Panc1 (cell line): ENCODE measurements at regions of chr18 and their contacts with region 1.

Region 1: GRCh38 chr18:74040459-74041332 is 106.9 kb downstream of the FBXO15 start:
- DNase-seq: no peak
- ATAC-seq: peak; percentile 95
- H3K4me3 ChIP-seq: no peak overlapping the region
- H3K27ac ChIP-seq: no peak overlapping the region
- H3K4me1 ChIP-seq: no peaks in the 10 kb centered on the region
- H3K27me3 ChIP-seq: no peaks in the 10 kb centered on the region
- CTCF ChIP-seq: peak; percentile 94

Region 2: GRCh38 chr18:73733806-73734314 is 306.8 kb before region 1 on chr18:
- CTCF ChIA-PET with region 1: no interaction called
- POLR2A ChIA-PET with region 1: no interaction called
- in situ Hi-C with region 1: no loop called
- intact Hi-C with region 1: no loop called
- DNase-seq: no peak
- ATAC-seq: no peak
- H3K4me3 ChIP-seq: no peak overlapping the region
- H3K27ac ChIP-seq: no peak overlapping the region
- H3K4me1 ChIP-seq: no peaks in the 10 kb centered on the region
- H3K27me3 ChIP-seq: no peaks in the 10 kb centered on the region
- CTCF ChIP-seq: no peak

Region 3: GRCh38 chr18:74116633-74117554 is 76.2 kb after region 1 on chr18:
- CTCF ChIA-PET with region 1: interaction called, 4 read pairs
- POLR2A ChIA-PET with region 1: no interaction called
- in situ Hi-C with region 1: no loop called
- intact Hi-C with region 1: loop called (anchors 5 kb)
- DNase-seq: peak; percentile 18
- ATAC-seq: peak; percentile 80; the same call in 1 of the 2 replicates
- H3K4me3 ChIP-seq: no peak overlapping the region
- H3K27ac ChIP-seq: no peak overlapping the region
- H3K4me1 ChIP-seq: no peaks in the 10 kb centered on the region
- H3K27me3 ChIP-seq: peaks cover 13% of the 10 kb centered on the region; the same call in 1 of the 2 replicates
- CTCF ChIP-seq: peak; percentile 86

Region 4: DNA sequence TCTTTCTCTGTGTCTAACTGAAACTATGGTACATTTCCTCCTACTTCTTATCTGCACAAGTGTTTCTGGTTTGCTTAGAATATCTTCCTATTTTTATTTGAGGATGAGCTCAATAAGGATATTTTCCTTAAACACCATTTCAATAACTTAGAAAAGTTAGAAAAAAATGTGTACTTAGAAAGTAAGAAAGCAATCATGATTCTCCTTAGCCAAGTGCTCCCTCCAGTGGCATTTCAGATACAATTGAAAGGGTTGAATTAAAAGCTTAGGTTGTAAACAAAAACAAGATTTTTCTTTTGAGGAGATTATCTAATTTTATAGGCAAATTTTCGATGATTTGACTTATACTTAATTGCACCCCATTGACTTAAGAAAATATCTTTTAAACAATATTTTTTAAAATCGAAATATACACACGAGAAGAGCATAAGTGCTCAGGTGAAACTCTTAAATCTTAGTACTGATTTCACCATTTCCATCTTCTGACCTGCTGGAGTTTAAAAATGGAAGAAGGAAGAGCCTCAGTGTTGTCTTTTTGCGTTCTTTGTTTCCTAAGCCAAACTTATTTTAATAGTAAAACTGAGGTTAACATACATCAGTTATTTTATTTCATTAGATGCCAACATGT is 301.8 kb after region 1 on chr18:
- CTCF ChIA-PET with region 1: interaction called, 4 read pairs
- POLR2A ChIA-PET with region 1: no interaction called
- in situ Hi-C with region 1: no loop called
- intact Hi-C with region 1: loop called (anchors 2 kb)
- DNase-seq: peak; percentile 54
- ATAC-seq: peak; percentile 83
- H3K4me3 ChIP-seq: no peak overlapping the region
- H3K27ac ChIP-seq: no peak overlapping the region
- H3K4me1 ChIP-seq: no peaks in the 10 kb centered on the region
- H3K27me3 ChIP-seq: peaks cover 29% of the 10 kb centered on the region
- CTCF ChIP-seq: peak; percentile 78; the same call in 1 of the 2 replicates

Region 5: GRCh38 chr18:74389171-74389927 is 348.7 kb after region 1 on chr18:
- CTCF ChIA-PET with region 1: no interaction called
- POLR2A ChIA-PET with region 1: no interaction called
- in situ Hi-C with region 1: no loop called
- intact Hi-C with region 1: no loop called
- DNase-seq: no peak
- ATAC-seq: no peak
- H3K4me3 ChIP-seq: no peak overlapping the region
- H3K27ac ChIP-seq: no peak overlapping the region
- H3K4me1 ChIP-seq: no peaks in the 10 kb centered on the region
- H3K27me3 ChIP-seq: peaks cover 25% of the 10 kb centered on the region
- CTCF ChIP-seq: no peak